ENCODE measurements at regions of chr17 and their contacts with region 1.

Region 1: DNA sequence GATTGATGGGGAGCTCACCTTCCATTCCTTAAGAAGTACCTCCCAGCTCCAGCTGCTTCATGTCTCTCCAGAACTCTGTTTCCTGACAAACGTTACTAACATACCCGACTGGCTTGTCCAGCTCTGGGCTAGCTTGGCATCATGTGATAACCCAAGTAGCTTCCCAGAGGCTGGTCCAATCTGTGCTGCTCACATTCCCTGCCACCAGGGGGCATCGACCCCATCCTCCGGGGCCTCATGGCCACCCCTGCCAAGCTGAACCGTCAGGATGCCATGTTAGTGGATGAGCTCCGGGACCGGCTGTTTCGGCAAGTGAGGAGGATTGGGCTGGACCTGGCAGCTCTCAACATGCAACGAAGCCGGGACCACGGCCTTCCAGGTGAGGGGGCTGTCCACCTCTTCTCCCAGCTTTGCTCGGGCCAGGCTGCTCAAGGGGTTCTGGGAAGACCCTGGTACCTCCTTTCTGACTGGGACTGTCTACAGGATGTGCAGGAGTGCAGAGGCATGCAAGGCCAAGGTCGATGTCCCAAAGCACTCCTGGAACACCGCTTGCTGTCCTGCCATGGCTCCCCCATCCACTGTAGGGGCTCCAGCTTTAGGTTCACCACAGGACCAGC is 7.6 kb downstream of the EPX start:
- DNase-seq: peak; percentile 27 to 89
- H3K4me3 ChIP-seq: no peak overlapping the region
- H3K27ac ChIP-seq: no peak overlapping the region
- H3K4me1 ChIP-seq: no peaks in the 10 kb centered on the region
- H3K27me3 ChIP-seq: no peaks in the 10 kb centered on the region
- CTCF ChIP-seq: peak; percentile 70 to 88 (median 86)
- EP300 ChIP-seq: no peak
- POLR2A ChIP-seq: no peak
- RAD21 ChIP-seq: peak; percentile 47 to 63

Region 2: DNA sequence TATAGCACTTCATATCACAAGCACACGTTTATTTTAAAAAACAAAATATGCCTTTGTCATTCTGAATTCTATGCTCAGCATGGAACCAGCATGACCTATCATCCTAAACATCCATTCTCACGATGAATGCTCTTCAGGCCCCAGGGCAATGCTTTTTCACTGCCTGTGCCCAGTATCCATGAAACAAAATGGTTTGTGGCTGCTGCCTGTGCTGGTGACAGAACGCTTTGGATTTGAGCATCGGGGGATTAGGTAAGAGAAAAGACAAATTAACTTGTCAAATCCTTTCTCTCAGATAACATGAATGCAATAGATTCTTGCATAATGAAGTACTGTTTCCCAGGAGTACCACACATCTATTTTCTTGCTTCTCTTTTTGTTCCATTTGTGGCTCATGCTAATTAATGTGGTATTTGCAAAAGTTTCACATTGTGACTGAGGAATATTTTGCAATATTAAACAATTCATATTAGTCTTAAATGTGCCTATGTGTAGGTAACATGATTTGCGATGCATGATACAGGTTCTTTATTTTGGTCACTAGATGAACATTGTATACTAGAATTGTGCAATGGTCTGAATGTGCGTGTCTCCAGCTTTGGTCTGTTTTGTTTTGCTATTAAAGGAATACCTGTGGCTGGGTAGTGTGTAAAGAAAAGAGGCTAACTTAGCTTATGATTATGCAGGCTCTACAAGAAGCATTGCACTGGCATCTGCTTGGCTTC is 167.3 kb before region 1 on chr17:
- CTCF ChIA-PET with region 1: no interaction called
- POLR2A ChIA-PET with region 1: no interaction called
- DNase-seq: peak in 1 of 2 experiments; percentile 27
- H3K4me3 ChIP-seq: no peak overlapping the region
- H3K27ac ChIP-seq: no peak overlapping the region
- H3K4me1 ChIP-seq: peaks cover 0 to 9% (median 2%) of the 10 kb centered on the region in 4 experiments; a peak in 2 of 7 replicates
- H3K27me3 ChIP-seq: no peaks in the 10 kb centered on the region
- CTCF ChIP-seq: no peak
- EP300 ChIP-seq: no peak
- POLR2A ChIP-seq: no peak
- RAD21 ChIP-seq: no peak

Region 3: DNA sequence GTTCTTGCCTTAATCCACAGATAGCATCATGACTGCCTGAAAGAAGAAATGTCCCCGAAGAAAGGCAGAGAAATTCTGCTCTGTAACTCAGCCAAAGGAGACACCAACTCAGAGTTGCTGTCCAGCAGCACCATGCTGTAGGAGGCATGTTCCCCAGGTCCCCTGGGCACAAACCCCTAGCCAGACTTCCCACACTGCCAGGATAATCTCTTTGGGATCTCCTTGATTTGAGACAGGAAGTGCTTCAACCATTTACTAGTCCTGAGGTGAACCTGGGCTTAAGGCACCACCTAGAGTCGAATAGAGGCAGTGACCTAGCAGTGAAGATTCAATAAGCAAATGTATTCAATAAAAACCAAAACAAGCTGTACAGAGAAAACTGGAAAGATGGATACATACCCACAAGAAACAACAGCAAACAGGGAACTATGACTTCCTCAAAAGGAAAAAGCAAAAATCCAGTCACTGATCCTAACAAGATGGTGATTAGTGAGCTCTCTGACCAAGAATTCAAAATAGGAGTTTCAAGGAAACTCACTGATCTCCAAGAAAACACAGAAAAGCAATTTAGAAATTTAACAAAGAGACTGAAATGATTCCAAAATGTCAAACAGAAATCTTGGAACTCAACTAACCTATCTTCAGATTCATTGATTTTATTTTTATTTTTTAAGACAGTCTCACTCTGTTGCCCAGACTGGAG is 27.6 kb before region 1 on chr17:
- CTCF ChIA-PET with region 1: interaction called, 11 read pairs
- POLR2A ChIA-PET with region 1: no interaction called
- DNase-seq: no peak
- H3K4me3 ChIP-seq: no peak overlapping the region
- H3K27ac ChIP-seq: no peak overlapping the region
- H3K4me1 ChIP-seq: no peaks in the 10 kb centered on the region
- H3K27me3 ChIP-seq: peaks cover 0 to 3% (median 2%) of the 10 kb centered on the region in 4 experiments; a peak in 1 of 7 replicates
- CTCF ChIP-seq: peak in 2 of 3 experiments; percentile 73 to 77; a peak in 3 of 4 replicates
- EP300 ChIP-seq: no peak
- POLR2A ChIP-seq: no peak
- RAD21 ChIP-seq: peak; percentile 87 to 92

Region 4: GRCh38 chr17:58184308-58184985 is 15.7 kb before region 1 on chr17:
- CTCF ChIA-PET with region 1: interaction called, 32 read pairs
- POLR2A ChIA-PET with region 1: no interaction called
- DNase-seq: peak in 1 of 2 experiments; percentile 23
- H3K4me3 ChIP-seq: no peak overlapping the region
- H3K27ac ChIP-seq: peak overlapping the region; percentile 7; the same call in 1 of the 2 replicates
- H3K4me1 ChIP-seq: peaks cover 0 to 5% (median 0%) of the 10 kb centered on the region in 4 experiments; a peak in 1 of 7 replicates
- H3K27me3 ChIP-seq: peaks cover 0 to 5% (median 0%) of the 10 kb centered on the region in 4 experiments; a peak in 1 of 7 replicates
- CTCF ChIP-seq: no peak
- EP300 ChIP-seq: no peak
- POLR2A ChIP-seq: no peak
- RAD21 ChIP-seq: no peak

Region 5: GRCh38 chr17:58189436-58190146 is 10.5 kb before region 1 on chr17:
- CTCF ChIA-PET with region 1: interaction called, 32 read pairs
- POLR2A ChIA-PET with region 1: interaction called, 6 read pairs
- DNase-seq: no peak
- H3K4me3 ChIP-seq: no peak overlapping the region
- H3K27ac ChIP-seq: no peak overlapping the region
- H3K4me1 ChIP-seq: peaks cover 0 to 6% (median 2%) of the 10 kb centered on the region in 4 experiments; a peak in 4 of 7 replicates
- H3K27me3 ChIP-seq: no peaks in the 10 kb centered on the region
- CTCF ChIP-seq: no peak
- EP300 ChIP-seq: no peak
- POLR2A ChIP-seq: no peak
- RAD21 ChIP-seq: no peak

Region 6: GRCh38 chr17:58219001-58219788 is 19.1 kb after region 1 on chr17 and contains the start of gene MKS1:
- CTCF ChIA-PET with region 1: interaction called, 127 read pairs
- POLR2A ChIA-PET with region 1: interaction called, 5 read pairs
- DNase-seq: peak; percentile 84 to 97
- H3K4me3 ChIP-seq: peak within 1 kb of the TSS; percentile 50 to 91 (median 81)
- H3K27ac ChIP-seq: no peak within 1 kb of the TSS
- H3K4me1 ChIP-seq: peaks cover 0 to 3% (median 0%) of the 10 kb centered on the region in 4 experiments; a peak in 2 of 7 replicates
- H3K27me3 ChIP-seq: no peaks in the 10 kb centered on the region
- CTCF ChIP-seq: peak; percentile 59 to 78 (median 73)
- EP300 ChIP-seq: no peak
- POLR2A ChIP-seq: peak; percentile 60 to 84
- RAD21 ChIP-seq: peak in 1 of 2 experiments; percentile 36; a peak in 3 of 4 replicates
- total RNA-seq, gene MKS1: 20.6 and 21.7 TPM in 2 replicates

Region 7: GRCh38 chr17:58224315-58224714 is 24.2 kb after region 1 on chr17:
- CTCF ChIA-PET with region 1: interaction called, 127 read pairs
- POLR2A ChIA-PET with region 1: interaction called, 3 read pairs
- DNase-seq: no peak
- H3K4me3 ChIP-seq: no peak overlapping the region
- H3K27ac ChIP-seq: no peak overlapping the region
- H3K4me1 ChIP-seq: peaks cover 0 to 6% (median 0%) of the 10 kb centered on the region in 4 experiments; a peak in 5 of 7 replicates
- H3K27me3 ChIP-seq: peaks cover 1 to 10% (median 5%) of the 10 kb centered on the region in 4 experiments; a peak in 4 of 7 replicates
- CTCF ChIP-seq: no peak
- EP300 ChIP-seq: no peak
- POLR2A ChIP-seq: no peak
- RAD21 ChIP-seq: no peak

Region 8: GRCh38 chr17:58249270-58250133 is 49.4 kb after region 1 on chr17:
- CTCF ChIA-PET with region 1: interaction called, 55 read pairs
- POLR2A ChIA-PET with region 1: interaction called, 3 read pairs
- DNase-seq: peak in 1 of 2 experiments; percentile 93
- H3K4me3 ChIP-seq: peak overlapping the region; percentile 28 to 56 (median 36); a peak in 7 of 8 replicates
- H3K27ac ChIP-seq: no peak overlapping the region
- H3K4me1 ChIP-seq: peaks cover 0 to 4% (median 1%) of the 10 kb centered on the region in 4 experiments; a peak in 4 of 7 replicates
- H3K27me3 ChIP-seq: peaks cover 36 to 70% (median 49%) of the 10 kb centered on the region in 4 experiments
- CTCF ChIP-seq: peak; percentile 85 to 88 (median 86)
- EP300 ChIP-seq: peak in 1 of 2 experiments; percentile 42; a peak in 1 of 3 replicates
- POLR2A ChIP-seq: no peak
- RAD21 ChIP-seq: peak; percentile 63 to 66

Region 9: GRCh38 chr17:58303971-58304725 is 104.0 kb after region 1 on chr17:
- CTCF ChIA-PET with region 1: no interaction called
- POLR2A ChIA-PET with region 1: no interaction called
- DNase-seq: peak; percentile 41 to 84
- H3K4me3 ChIP-seq: no peak overlapping the region
- H3K27ac ChIP-seq: peak overlapping the region; percentile 16; the same call in 1 of the 2 replicates
- H3K4me1 ChIP-seq: peaks cover 0 to 15% (median 10%) of the 10 kb centered on the region in 4 experiments; a peak in 5 of 7 replicates
- H3K27me3 ChIP-seq: no peaks in the 10 kb centered on the region
- CTCF ChIP-seq: peak; percentile 82 to 97 (median 93)
- EP300 ChIP-seq: no peak
- POLR2A ChIP-seq: no peak
- RAD21 ChIP-seq: peak; percentile 55 to 64

Measured in H1 (cell line).